ENCODE measurements at regions of chr12 and their contacts with region 1.

Region 1: DNA sequence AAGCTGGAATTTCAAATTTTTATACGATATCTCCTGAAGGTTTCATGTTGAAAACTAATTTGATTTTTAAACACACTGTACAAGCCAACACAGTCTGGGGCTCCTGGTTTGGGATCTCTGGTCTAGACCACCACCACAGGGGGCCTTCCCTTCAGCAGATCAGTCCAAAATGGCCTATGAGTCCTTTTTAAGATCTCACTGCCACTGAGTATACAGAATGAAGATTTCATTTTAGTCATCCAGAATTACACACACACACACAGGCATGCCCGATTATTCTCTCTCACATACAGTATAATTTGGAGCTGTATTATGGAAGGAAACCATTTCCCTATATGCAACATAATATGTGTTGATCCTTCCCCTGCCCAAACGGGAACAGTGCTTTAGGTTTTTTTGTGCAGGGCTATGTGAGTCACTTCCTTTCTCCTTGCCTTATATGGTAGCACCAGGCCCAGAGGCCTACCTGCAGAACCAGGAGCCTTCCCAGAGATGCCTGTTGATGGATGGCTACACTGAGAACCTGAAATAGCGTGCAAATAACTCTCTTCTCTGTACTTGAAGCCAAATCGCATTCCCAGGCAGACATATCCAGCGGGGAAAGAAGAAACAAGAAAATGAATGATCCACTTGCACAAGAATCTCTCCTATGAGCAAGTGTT is 28.1 kb upstream of the WNK1 start:
- DNase-seq: no peak
- H3K4me3 ChIP-seq: no peak overlapping the region
- H3K4me3 Mint-ChIP-seq: no peak overlapping the region
- H3K27ac Mint-ChIP-seq: no peak overlapping the region
- H3K4me1 ChIP-seq: peaks cover 5% of the 10 kb centered on the region; the same call in 1 of the 2 replicates
- H3K4me1 Mint-ChIP-seq: peaks cover 7% of the 10 kb centered on the region
- H3K27me3 ChIP-seq: no peaks in the 10 kb centered on the region
- H3K27me3 Mint-ChIP-seq: no peaks in the 10 kb centered on the region
- CTCF ChIP-seq: no peak

Region 2: DNA sequence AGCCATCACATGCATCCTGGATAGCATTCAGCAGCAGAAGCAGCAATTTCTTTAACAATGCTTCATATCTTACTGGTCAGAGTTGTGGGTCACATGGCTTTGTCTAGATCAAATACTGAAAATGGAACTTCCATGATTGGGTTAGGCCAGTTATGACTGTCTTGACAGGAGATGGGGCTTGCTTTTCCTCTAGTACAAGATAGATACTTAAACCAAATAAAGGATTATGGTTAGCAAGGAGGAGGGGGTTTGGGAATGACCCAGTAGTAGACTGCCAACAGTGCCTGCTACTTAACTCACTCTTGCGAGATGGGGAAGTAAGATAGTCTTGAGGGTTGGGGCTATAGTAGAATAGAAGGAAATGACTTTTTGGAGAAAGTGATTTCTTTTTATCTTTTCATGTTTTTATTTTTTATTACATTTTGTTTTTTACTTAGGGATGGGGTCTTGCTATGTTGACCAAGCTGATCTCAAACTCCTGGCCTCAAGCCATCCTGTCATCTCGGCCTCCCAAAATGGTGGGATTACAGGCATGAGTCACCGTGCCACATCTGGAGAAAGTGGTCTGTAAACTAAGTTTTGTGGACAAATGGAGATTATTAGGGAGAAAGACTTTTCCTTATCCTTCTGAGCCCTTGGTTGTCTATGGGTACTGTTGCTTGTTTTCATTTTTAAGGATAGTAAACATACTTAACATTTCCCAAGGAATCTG is 65.7 kb after region 1 on chr12:
- CTCF ChIA-PET with region 1: no interaction called
- POLR2A ChIA-PET with region 1: interaction called, 10 read pairs
- intact Hi-C with region 1: no loop called
- DNase-seq: no peak
- H3K4me3 ChIP-seq: no peak overlapping the region
- H3K4me3 Mint-ChIP-seq: no peak overlapping the region
- H3K27ac Mint-ChIP-seq: peak overlapping the region; percentile 38
- H3K4me1 ChIP-seq: peaks cover 16% of the 10 kb centered on the region
- H3K4me1 Mint-ChIP-seq: peaks cover 8% of the 10 kb centered on the region
- H3K27me3 ChIP-seq: no peaks in the 10 kb centered on the region
- H3K27me3 Mint-ChIP-seq: no peaks in the 10 kb centered on the region
- CTCF ChIP-seq: no peak

Region 3: GRCh38 chr12:1481326-1481725 is 757.0 kb after region 1 on chr12:
- CTCF ChIA-PET with region 1: no interaction called
- POLR2A ChIA-PET with region 1: no interaction called
- intact Hi-C with region 1: loop called (anchors 5 kb)
- DNase-seq: no peak
- H3K4me3 ChIP-seq: no peak overlapping the region
- H3K4me3 Mint-ChIP-seq: no peak overlapping the region
- H3K27ac Mint-ChIP-seq: no peak overlapping the region
- H3K4me1 ChIP-seq: no peaks in the 10 kb centered on the region
- H3K4me1 Mint-ChIP-seq: no peaks in the 10 kb centered on the region
- H3K27me3 ChIP-seq: no peaks in the 10 kb centered on the region
- H3K27me3 Mint-ChIP-seq: no peaks in the 10 kb centered on the region
- CTCF ChIP-seq: no peak

Measured in Caco-2 (cell line).